Common myeloid progenitor, CD34-positive (primary cell): ENCODE measurements at regions of chr2 and their contacts with region 1.

Region 1: DNA sequence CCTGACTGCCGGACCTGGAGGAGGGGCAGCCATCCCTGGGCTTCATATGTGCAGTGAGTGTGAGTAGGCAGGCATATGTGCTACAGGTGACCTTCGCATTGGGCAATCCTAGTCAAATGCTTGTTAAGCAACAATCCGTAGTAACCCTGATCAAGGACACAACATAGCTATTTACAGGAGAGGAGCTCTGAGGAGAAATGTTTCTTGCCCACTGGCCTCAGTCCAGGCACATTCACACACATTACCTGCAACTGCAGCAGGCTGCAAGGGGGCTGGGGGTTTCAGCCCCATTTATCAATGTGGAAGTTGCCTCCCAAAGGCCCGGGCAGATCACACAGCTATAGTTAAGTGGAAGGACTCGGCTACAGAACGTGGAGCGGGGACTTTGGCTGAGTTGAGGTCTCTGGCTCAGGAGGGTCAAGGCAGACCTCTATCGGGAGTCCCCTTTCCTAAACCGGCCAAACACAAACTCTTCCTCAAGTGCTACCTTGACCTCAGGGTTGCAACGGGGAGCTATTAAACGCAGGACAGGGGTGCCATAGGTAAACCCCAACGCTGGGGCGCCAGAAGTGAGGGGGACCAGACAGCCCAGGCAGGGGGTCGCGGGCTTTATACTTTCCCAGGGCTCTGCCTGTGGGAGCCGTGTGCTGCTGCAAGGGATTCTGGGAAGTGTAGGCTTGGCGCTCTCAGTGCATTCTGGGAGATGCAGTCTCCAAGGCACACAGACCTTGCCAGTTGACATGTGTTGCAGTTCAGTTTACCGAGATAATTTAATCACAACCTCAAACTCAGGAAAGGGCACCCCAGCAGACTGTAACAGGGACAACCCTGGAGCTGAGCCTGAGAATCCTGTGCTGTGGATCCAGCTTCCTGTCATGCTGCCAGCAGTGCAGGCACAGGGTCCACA is 9.4 kb downstream of the KHK start:
- DNase-seq: peak in 2 of 3 donors; percentile 66 to 68
- H3K4me3 ChIP-seq: peak overlapping the region in 5 of 7 experiments; percentile 35 to 77 (median 57)
- H3K27ac ChIP-seq: peak overlapping the region in 1 of 2 experiments; percentile 11
- H3K4me1 ChIP-seq: peaks cover 0 to 12% (median 10%) of the 10 kb centered on the region in 4 experiments
- H3K27me3 ChIP-seq: no peaks in the 10 kb centered on the region

Region 2: DNA sequence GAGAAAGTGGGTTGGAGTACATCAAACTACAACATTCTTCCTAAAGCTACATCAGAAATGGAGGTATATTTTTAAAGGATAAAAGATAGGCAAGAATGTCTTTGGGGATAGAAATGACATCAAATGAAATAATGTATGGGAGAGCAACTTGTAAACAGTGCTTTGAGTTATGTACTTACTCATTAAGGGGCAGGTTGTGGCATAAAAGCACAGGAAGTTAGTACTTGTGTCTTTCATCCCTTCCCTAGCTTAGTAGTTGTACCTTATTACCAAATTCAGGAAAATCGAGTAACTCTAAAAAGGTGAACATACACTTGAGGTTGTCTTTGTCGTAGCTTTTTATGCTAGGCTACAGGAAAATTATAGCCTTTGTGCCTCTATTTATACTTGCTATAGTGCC is 1684.5 kb after region 1 on chr2:
- CTCF ChIA-PET with region 1: no interaction called
- POLR2A ChIA-PET with region 1: interaction called, 11 read pairs
- DNase-seq: no peak
- H3K4me3 ChIP-seq: no peak overlapping the region
- H3K27ac ChIP-seq: no peak overlapping the region
- H3K4me1 ChIP-seq: peaks cover 0 to 3% (median under 1%) of the 10 kb centered on the region in 4 experiments
- H3K27me3 ChIP-seq: no peaks in the 10 kb centered on the region